ENCODE measurements at regions of chr12 and their contacts with region 1.

Region 1: GRCh38 chr12:49060237-49061156 is at the start of gene KMT2D:
- DNase-seq: peak; percentile 91
- H3K4me3 Mint-ChIP-seq: peak within 1 kb of the TSS; percentile 94
- H3K27ac Mint-ChIP-seq: peak within 1 kb of the TSS; percentile 96
- H3K4me1 Mint-ChIP-seq: peaks cover 43% of the 10 kb centered on the region
- H3K27me3 Mint-ChIP-seq: no peaks in the 10 kb centered on the region
- total RNA-seq, gene KMT2D: 47.9 to 49.0 TPM

Region 2: GRCh38 chr12:48988030-48988649 is 72.4 kb before region 1 on chr12:
- CTCF ChIA-PET with region 1: interaction called, 12 read pairs
- POLR2A ChIA-PET with region 1: no interaction called
- intact Hi-C with region 1: no loop called
- DNase-seq: peak; percentile 86
- H3K4me3 Mint-ChIP-seq: no peak overlapping the region
- H3K27ac Mint-ChIP-seq: no peak overlapping the region
- H3K4me1 Mint-ChIP-seq: peaks cover 5% of the 10 kb centered on the region
- H3K27me3 Mint-ChIP-seq: peaks cover 24% of the 10 kb centered on the region

Region 3: GRCh38 chr12:49018261-49019119 is 42.0 kb before region 1 on chr12 and contains the start of gene PRKAG1:
- CTCF ChIA-PET with region 1: interaction called, 8 read pairs
- POLR2A ChIA-PET with region 1: interaction called, 3 read pairs
- intact Hi-C with region 1: loop called (anchors 2 kb)
- DNase-seq: peak; percentile 97
- H3K4me3 Mint-ChIP-seq: peak within 1 kb of the TSS; percentile 95
- H3K27ac Mint-ChIP-seq: peak within 1 kb of the TSS; percentile 92
- H3K4me1 Mint-ChIP-seq: peaks cover 40% of the 10 kb centered on the region
- H3K27me3 Mint-ChIP-seq: no peaks in the 10 kb centered on the region
- total RNA-seq, gene PRKAG1: 52.0 to 55.8 TPM

Region 4: DNA sequence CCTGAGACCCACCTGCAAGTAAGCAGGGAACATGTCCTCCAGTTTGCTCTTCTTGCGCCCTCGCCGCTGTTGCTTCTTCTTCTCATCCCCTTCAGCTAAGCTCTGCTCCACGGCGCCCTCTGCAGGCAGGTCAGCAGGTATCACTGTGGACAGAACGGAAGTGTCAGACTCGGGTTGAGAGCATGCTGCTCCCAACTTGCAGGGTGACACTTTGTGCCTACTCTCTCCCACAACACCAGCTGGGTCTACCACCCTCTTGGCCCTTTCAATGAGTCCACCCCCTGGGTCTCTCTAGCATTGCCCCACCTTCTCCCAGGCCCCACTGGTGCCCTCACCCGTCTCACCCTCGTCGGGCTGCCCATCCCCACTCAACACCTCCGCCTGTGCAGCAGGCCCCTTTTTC is 16.6 kb before region 1 on chr12:
- CTCF ChIA-PET with region 1: interaction called, 30 read pairs
- POLR2A ChIA-PET with region 1: no interaction called
- intact Hi-C with region 1: no loop called
- DNase-seq: peak; percentile 84
- H3K4me3 Mint-ChIP-seq: no peak overlapping the region
- H3K27ac Mint-ChIP-seq: peak overlapping the region; percentile 51
- H3K4me1 Mint-ChIP-seq: peaks cover 2% of the 10 kb centered on the region
- H3K27me3 Mint-ChIP-seq: no peaks in the 10 kb centered on the region

Region 5: DNA sequence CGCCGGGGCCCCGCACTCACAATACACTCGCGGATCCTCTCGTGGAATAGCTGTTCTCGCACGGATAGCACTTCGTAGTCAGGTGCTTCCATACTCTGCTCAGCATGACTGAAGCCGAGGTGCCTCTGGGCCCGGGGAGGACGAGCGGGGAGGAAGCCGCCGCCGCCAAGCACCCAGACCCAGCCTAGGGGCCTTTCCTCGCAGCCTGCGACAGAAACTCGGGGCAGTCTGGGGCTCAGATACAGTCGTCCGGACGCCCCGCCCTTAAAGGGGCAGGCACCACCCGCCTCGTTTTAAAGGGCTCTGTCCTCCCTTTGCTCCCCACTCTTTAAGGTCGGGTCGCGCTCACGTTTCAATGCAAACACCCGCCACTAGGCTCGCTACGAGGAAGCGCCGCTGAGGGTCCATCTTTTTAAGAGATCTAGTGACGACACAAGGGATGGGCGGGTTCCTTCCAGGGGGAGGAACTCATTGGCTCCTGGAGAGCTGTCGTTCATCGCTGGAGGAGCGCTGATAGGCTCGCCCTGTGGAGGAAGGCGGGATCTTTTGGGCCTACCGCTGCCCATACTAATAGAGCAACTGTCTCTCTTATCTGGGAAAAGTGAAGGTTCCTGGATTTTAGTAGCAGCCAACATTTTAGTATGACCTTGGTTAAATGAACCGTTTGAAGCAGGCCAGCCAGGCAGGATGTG is 50.1 kb after region 1 on chr12 and contains the start of gene LMBR1L:
- CTCF ChIA-PET with region 1: interaction called, 19 read pairs
- POLR2A ChIA-PET with region 1: no interaction called
- intact Hi-C with region 1: no loop called
- DNase-seq: peak; percentile 97
- H3K4me3 Mint-ChIP-seq: peak within 1 kb of the TSS; percentile 95
- H3K27ac Mint-ChIP-seq: peak within 1 kb of the TSS; percentile 80
- H3K4me1 Mint-ChIP-seq: peaks cover 24% of the 10 kb centered on the region
- H3K27me3 Mint-ChIP-seq: no peaks in the 10 kb centered on the region
- total RNA-seq, gene LMBR1L: 55.0 to 59.1 TPM

Region 6: DNA sequence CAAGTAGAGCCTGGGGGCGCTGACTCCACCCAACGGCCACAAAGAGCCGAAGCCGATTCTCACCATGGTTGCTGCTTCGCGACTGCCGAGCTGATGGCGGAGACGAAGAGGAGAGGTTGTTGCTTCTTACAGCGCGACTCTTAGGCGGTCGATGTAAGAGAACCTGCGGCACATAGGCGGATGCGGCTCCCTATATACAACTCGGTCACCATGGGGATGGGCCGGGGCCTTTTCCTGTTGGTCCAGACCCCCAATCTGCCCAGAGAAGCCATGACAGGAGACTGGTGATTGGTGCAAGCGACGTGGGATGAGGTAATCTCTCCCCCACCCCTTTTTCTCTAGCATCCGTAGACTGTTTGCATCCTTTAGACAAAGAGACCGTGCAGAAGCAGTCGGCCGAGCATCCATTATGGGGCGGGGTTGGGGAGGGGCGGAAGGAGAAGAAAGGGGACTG is 128.4 kb after region 1 on chr12 and contains the start of gene TUBA1A:
- CTCF ChIA-PET with region 1: no interaction called
- POLR2A ChIA-PET with region 1: no interaction called
- intact Hi-C with region 1: loop called (anchors 2 kb)
- DNase-seq: peak; percentile 97
- H3K4me3 Mint-ChIP-seq: peak within 1 kb of the TSS; percentile 90
- H3K27ac Mint-ChIP-seq: peak within 1 kb of the TSS; percentile 95
- H3K4me1 Mint-ChIP-seq: peaks cover 16% of the 10 kb centered on the region
- H3K27me3 Mint-ChIP-seq: no peaks in the 10 kb centered on the region
- total RNA-seq, gene TUBA1A: 86.4 to 88.7 TPM

Measured in activated CD4-positive, alpha-beta memory T cell treated with anti-CD3 and anti-CD28 coated beads for 36 hours (primary cell).